ENCODE measurements at regions of chr7 and their contacts with region 1.

Region 1: GRCh38 chr7:3463696-3464095 is 162.6 kb downstream of the SDK1 start:
- DNase-seq: no peak
- ATAC-seq: no peak
- H3K4me3 ChIP-seq: no peak overlapping the region
- H3K27ac ChIP-seq: no peak overlapping the region
- H3K4me1 ChIP-seq: peaks cover 10% of the 10 kb centered on the region
- H3K27me3 ChIP-seq: no peaks in the 10 kb centered on the region
- CTCF ChIP-seq: no peak
- EP300 ChIP-seq: no peak
- POLR2A ChIP-seq: no peak
- RAD21 ChIP-seq: no peak

Region 2: DNA sequence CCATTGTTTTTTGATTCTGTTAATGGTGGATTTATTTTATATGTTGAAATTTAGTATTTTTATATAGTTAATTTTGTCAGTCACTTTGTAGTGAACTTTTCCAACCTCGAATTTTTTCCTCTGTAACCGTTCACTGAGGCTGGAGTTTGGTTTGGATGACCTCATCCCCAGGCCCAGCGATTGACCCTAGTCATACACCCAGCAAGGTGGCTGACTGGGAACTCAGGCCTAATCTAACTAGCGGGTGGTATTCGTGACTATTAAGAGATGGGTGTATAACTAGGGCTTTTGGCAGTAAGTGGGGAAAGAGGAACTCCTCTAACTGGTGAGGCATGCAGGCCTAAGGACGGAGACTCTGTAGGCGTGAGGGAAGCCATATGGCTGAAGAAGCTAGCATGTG is 12.9 kb after region 1 on chr7:
- CTCF ChIA-PET with region 1: no interaction called
- POLR2A ChIA-PET with region 1: no interaction called
- in situ Hi-C with region 1: no loop called
- intact Hi-C with region 1: loop called (anchors 1 kb)
- DNase-seq: no peak
- ATAC-seq: no peak
- H3K4me3 ChIP-seq: no peak overlapping the region
- H3K27ac ChIP-seq: no peak overlapping the region
- H3K4me1 ChIP-seq: peaks cover 13% of the 10 kb centered on the region
- H3K27me3 ChIP-seq: no peaks in the 10 kb centered on the region
- CTCF ChIP-seq: no peak
- EP300 ChIP-seq: no peak
- POLR2A ChIP-seq: no peak
- RAD21 ChIP-seq: no peak

Region 3: DNA sequence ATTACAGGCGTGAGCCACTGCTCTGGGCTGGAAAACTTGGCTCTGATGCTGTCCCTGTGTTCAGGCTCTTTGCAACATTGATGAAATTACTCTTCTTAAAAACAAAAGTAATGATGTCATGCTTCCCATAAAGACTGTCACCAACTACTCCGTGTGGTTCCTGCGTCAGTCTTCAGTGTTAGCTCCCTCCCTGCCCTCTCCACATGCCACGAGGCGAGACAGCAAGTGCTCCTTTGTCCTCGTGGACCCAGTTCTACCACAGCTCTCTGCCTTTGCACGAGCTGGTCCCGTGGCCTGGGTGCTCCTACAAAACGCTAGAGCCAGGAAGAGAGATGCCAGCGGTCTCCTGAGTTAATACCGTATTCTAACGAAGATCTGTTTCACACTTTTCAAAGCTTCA is 31.8 kb after region 1 on chr7:
- CTCF ChIA-PET with region 1: no interaction called
- POLR2A ChIA-PET with region 1: no interaction called
- in situ Hi-C with region 1: no loop called
- intact Hi-C with region 1: no loop called
- DNase-seq: no peak
- ATAC-seq: no peak
- H3K4me3 ChIP-seq: no peak overlapping the region
- H3K27ac ChIP-seq: no peak overlapping the region
- H3K4me1 ChIP-seq: peaks cover 9% of the 10 kb centered on the region; the same call in 1 of the 2 replicates
- H3K27me3 ChIP-seq: no peaks in the 10 kb centered on the region
- CTCF ChIP-seq: no peak
- EP300 ChIP-seq: no peak
- POLR2A ChIP-seq: no peak
- RAD21 ChIP-seq: no peak

Measured in HepG2 (cell line).